OCI-LY7 (cell line): ENCODE measurements at regions of chr19 and their contacts with region 1.

Region 1: GRCh38 chr19:28324275-28325060 is 888.5 kb downstream of the UQCRFS1 start:
- DNase-seq: no peak
- H3K4me3 ChIP-seq: no peak overlapping the region
- H3K27ac ChIP-seq: no peak overlapping the region
- H3K4me1 ChIP-seq: no peaks in the 10 kb centered on the region
- CTCF ChIP-seq: 0 out of 2 replicates have a peak, but pooled peaks have one; percentile 19

Region 2: DNA sequence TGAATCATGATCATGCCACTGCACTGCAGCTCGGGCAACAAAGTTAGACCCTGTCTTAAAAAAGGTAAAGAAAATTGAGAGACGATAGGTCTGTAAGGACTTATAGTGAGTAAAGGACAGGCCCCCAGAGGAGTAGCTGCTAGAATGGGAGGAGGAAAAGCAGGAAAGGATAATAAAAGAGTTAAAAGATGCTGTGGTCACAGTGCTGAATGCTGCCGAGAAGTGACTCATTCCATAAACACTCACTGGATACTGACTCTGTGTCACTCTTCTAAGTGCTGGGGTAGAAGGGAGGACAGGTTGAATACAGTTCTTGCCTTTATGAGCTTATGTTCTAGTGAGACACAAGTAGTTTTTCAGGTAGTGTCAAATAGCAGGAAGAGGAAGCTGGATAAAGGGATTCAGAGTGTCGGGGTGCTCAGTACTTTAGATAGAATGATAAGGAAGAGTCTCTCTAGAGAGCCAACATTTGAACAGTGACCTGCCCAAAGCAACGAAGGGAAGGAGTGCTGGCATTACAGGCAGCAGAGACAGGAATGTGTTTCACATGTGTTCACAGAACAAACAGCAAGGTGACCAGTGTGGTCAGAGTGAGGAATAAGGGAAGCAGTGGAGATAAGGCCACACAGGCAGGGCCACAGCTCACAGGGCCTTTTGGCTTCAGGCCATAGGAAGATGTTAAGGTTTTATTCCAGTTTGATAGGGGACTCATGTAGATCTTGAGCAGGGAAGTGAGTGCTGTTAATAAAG is 352.0 kb before region 1 on chr19:
- CTCF ChIA-PET with region 1: no interaction called
- POLR2A ChIA-PET with region 1: no interaction called
- intact Hi-C with region 1: loop called (anchors 1 kb)
- DNase-seq: no peak
- H3K4me3 ChIP-seq: no peak overlapping the region
- H3K27ac ChIP-seq: no peak overlapping the region
- H3K4me1 ChIP-seq: no peaks in the 10 kb centered on the region
- CTCF ChIP-seq: no peak

Region 3: GRCh38 chr19:28242297-28242927 is 82.1 kb before region 1 on chr19:
- CTCF ChIA-PET with region 1: no interaction called
- POLR2A ChIA-PET with region 1: no interaction called
- intact Hi-C with region 1: loop called (anchors 1 kb)
- DNase-seq: peak; percentile 53
- H3K4me3 ChIP-seq: no peak overlapping the region
- H3K27ac ChIP-seq: no peak overlapping the region
- H3K4me1 ChIP-seq: no peaks in the 10 kb centered on the region
- CTCF ChIP-seq: peak; percentile 87

Region 4: DNA sequence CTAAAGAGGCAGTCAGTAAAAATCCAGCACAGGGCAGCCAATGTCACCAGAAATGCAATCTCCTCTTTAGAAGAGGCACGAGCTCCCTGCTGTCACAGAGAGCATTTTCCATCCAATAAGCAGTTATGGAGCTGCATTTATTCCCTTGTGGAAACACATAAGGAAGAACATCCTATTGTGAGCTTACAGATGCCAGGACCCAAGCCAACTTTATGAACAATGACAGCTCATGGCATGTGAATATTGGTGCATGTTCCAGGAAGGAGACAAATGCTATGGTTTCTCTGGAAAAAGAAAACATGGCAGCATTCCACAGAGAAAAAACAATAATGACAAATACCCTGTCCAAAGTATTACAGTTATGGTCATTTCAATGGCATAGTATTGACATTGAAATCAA is 67.1 kb before region 1 on chr19:
- CTCF ChIA-PET with region 1: no interaction called
- POLR2A ChIA-PET with region 1: no interaction called
- intact Hi-C with region 1: no loop called
- DNase-seq: no peak
- H3K4me3 ChIP-seq: no peak overlapping the region
- H3K27ac ChIP-seq: no peak overlapping the region
- H3K4me1 ChIP-seq: no peaks in the 10 kb centered on the region
- CTCF ChIP-seq: no peak

Region 5: GRCh38 chr19:28435551-28436271 is 111.2 kb after region 1 on chr19:
- CTCF ChIA-PET with region 1: no interaction called
- POLR2A ChIA-PET with region 1: no interaction called
- intact Hi-C with region 1: no loop called
- DNase-seq: peak; percentile 54
- H3K4me3 ChIP-seq: no peak overlapping the region
- H3K27ac ChIP-seq: peak overlapping the region; percentile 83
- H3K4me1 ChIP-seq: peaks cover 35% of the 10 kb centered on the region
- CTCF ChIP-seq: no peak

Region 6: DNA sequence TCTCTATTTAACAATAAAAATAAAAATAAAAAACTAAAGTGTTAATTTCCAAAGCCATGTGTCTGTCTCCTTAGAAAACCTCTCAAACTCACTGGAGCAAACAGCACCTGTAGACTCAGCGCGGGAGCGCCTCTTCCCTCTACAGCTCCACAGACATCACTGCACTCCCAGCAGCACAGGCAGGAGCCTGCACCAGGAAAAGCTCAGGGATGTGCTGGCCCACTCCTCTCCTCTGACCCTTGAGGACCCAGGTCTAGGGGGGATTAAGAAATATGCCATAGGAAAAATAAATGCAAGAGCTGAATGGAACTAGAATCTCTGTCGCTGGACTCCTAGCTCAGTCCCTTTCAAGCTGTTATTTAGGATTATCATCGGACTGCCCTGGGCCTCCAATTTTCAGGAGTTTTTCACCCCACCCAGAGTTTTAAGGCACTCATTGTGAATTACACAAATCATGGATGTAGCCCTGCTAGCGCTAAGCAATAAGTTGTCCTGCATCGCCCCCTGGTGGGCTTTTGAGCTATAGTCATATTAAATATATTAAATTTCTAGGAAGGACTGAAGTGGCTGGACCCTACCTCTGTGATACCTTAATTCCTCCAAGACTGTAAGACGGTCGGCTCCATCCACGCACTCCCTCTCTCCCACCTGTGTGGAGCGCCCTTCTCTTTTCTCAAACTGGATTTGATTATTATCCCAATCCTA is 554.5 kb after region 1 on chr19:
- CTCF ChIA-PET with region 1: no interaction called
- POLR2A ChIA-PET with region 1: no interaction called
- intact Hi-C with region 1: loop called (anchors 5 kb)
- DNase-seq: peak; percentile 82
- H3K4me3 ChIP-seq: no peak overlapping the region
- H3K27ac ChIP-seq: no peak overlapping the region
- H3K4me1 ChIP-seq: no peaks in the 10 kb centered on the region
- CTCF ChIP-seq: peak; percentile 84